ENCODE measurements at regions of chr11 and their contacts with region 1.

Region 1: DNA sequence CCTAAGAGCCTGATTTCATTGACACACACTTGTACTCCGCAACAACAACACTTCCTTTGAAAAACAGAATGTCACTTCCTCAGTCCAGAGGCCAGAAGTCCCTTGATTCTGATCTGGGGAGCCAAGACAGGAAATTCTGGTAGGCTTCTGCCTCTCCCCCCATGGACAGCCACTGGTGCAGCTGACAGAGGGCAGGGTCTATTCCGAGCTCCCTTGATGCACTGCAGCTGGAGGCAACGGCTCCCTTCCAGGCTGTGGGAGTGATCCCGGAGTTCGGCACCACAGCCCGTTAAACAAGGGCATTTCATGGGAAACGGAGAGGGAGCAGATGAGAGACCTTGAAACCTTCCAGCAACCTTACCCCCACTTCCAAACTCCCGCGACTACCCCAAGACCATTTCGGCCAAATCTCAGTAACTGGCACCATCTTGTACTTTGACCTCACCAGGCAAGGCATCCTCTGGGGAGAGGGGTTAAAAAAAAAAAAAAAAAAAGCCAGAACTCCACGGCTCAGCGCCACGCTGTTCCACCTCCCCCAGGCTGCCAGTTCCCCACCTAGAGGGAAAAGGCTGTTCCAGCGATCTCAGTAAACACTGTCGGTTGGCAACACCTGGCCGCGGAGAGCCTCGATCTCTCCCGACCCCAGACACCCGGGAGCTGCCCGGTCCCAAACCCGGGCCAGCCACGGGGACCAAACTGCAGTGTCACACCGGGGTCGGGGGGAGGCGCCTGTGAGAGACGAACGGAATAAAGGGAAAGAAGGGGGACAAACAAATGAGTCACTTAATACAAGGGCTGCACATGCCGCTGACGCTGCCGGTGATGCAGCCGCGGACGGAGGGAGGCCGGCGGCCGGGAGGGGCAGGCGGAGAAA is 1.1 kb downstream of the GAB2 start:
- DNase-seq: peak; percentile 84 to 90 (median 87)
- H3K4me3 ChIP-seq: peak overlapping the region; percentile 89
- H3K27ac ChIP-seq: peak overlapping the region; percentile 96 to 99
- H3K4me1 ChIP-seq: peaks cover 14% of the 10 kb centered on the region
- H3K27me3 ChIP-seq: no peaks in the 10 kb centered on the region
- CTCF ChIP-seq: peak in 2 of 3 donors; percentile 43 to 64
- EP300 ChIP-seq: no peak
- POLR2A ChIP-seq: peak; percentile 80

Region 2: GRCh38 chr11:78149646-78150045 is 266.9 kb before region 1 on chr11:
- intact Hi-C with region 1: loop called in 2 of 4 experiments (anchors 5 to 10 kb)
- DNase-seq: peak in 1 of 5 donors; percentile 56
- H3K4me3 ChIP-seq: no peak overlapping the region
- H3K27ac ChIP-seq: no peak overlapping the region
- H3K4me1 ChIP-seq: peaks cover 1% of the 10 kb centered on the region
- H3K27me3 ChIP-seq: no peaks in the 10 kb centered on the region
- CTCF ChIP-seq: peak in 1 of 3 donors; percentile 46
- EP300 ChIP-seq: no peak
- POLR2A ChIP-seq: no peak

Region 3: GRCh38 chr11:78228467-78228866 is 188.1 kb before region 1 on chr11:
- intact Hi-C with region 1: loop called in 3 of 4 experiments (anchors 5 to 10 kb)
- DNase-seq: peak in 1 of 5 donors; percentile 41
- H3K4me3 ChIP-seq: no peak overlapping the region
- H3K27ac ChIP-seq: no peak overlapping the region
- H3K4me1 ChIP-seq: peaks cover 2% of the 10 kb centered on the region
- H3K27me3 ChIP-seq: no peaks in the 10 kb centered on the region
- CTCF ChIP-seq: peak in 2 of 3 donors; percentile 59 to 63
- EP300 ChIP-seq: no peak
- POLR2A ChIP-seq: no peak

Region 4: GRCh38 chr11:78256962-78257361 is 159.6 kb before region 1 on chr11:
- intact Hi-C with region 1: loop called in 2 of 4 experiments (anchors 5 to 10 kb)
- DNase-seq: peak; percentile 78 to 90 (median 87)
- H3K4me3 ChIP-seq: no peak overlapping the region
- H3K27ac ChIP-seq: peak overlapping the region in 1 of 2 donors; percentile 33
- H3K4me1 ChIP-seq: peaks cover 43% of the 10 kb centered on the region
- H3K27me3 ChIP-seq: no peaks in the 10 kb centered on the region
- CTCF ChIP-seq: no peak
- EP300 ChIP-seq: no peak
- POLR2A ChIP-seq: no peak

Region 5: GRCh38 chr11:78564490-78565467 is 148.2 kb after region 1 on chr11:
- intact Hi-C with region 1: loop called in 3 of 4 experiments (anchors 5 to 10 kb)
- DNase-seq: peak in 1 of 5 donors; percentile 53
- H3K4me3 ChIP-seq: no peak overlapping the region
- H3K27ac ChIP-seq: no peak overlapping the region
- H3K4me1 ChIP-seq: peaks cover 13% of the 10 kb centered on the region
- H3K27me3 ChIP-seq: no peaks in the 10 kb centered on the region
- CTCF ChIP-seq: peak; percentile 74 to 83 (median 80)
- EP300 ChIP-seq: no peak
- POLR2A ChIP-seq: no peak